Naive thymus-derived CD4-positive, alpha-beta T cell (primary cell): ENCODE measurements at regions of chr3 and their contacts with region 1.

Region 1: GRCh38 chr3:119240591-119241434 is at the start of gene B4GALT4:
- DNase-seq: peak; percentile 59 to 79 (median 63)
- ATAC-seq: peak; percentile 78
- H3K4me3 ChIP-seq: peak within 1 kb of the TSS; percentile 71
- H3K4me3 Mint-ChIP-seq: peak within 1 kb of the TSS; percentile 90 to 99 (median 94)
- H3K27ac ChIP-seq: peak within 1 kb of the TSS; percentile 90
- H3K27ac Mint-ChIP-seq: peak within 1 kb of the TSS; percentile 83 to 96 (median 91)
- H3K4me1 ChIP-seq: peaks cover 23 to 27% of the 10 kb centered on the region in 2 donors
- H3K4me1 Mint-ChIP-seq: peaks cover 24 to 45% (median 36%) of the 10 kb centered on the region in 7 donors
- H3K27me3 ChIP-seq: no peaks in the 10 kb centered on the region
- H3K27me3 Mint-ChIP-seq: no peaks in the 10 kb centered on the region
- total RNA-seq, gene B4GALT4: 18.0 to 39.8 (median 31.9) TPM

Region 2: GRCh38 chr3:118960876-118961450 is 279.9 kb before region 1 on chr3:
- CTCF ChIA-PET with region 1: interaction called, 4 read pairs
- POLR2A ChIA-PET with region 1: no interaction called
- intact Hi-C with region 1: loop called in 1 of 2 experiments (anchors 2 kb)
- DNase-seq: no peak
- ATAC-seq: no peak
- H3K4me3 ChIP-seq: no peak overlapping the region
- H3K4me3 Mint-ChIP-seq: no peak overlapping the region
- H3K27ac ChIP-seq: no peak overlapping the region
- H3K27ac Mint-ChIP-seq: no peak overlapping the region
- H3K4me1 ChIP-seq: peaks cover 9 to 19% of the 10 kb centered on the region in 2 donors
- H3K4me1 Mint-ChIP-seq: peaks cover 13 to 34% (median 29%) of the 10 kb centered on the region in 7 donors
- H3K27me3 ChIP-seq: no peaks in the 10 kb centered on the region
- H3K27me3 Mint-ChIP-seq: peaks cover 0 to 25% (median 4%) of the 10 kb centered on the region in 5 donors

Region 3: GRCh38 chr3:119206611-119207511 is 34.0 kb before region 1 on chr3:
- CTCF ChIA-PET with region 1: interaction called, 5 read pairs
- POLR2A ChIA-PET with region 1: interaction called, 9 read pairs
- intact Hi-C with region 1: loop called in 1 of 2 experiments (anchors 1 kb)
- DNase-seq: peak in 7 of 9 donors; percentile 38 to 62 (median 54)
- ATAC-seq: peak; percentile 64
- H3K4me3 ChIP-seq: peak overlapping the region; percentile 40
- H3K4me3 Mint-ChIP-seq: peak overlapping the region; percentile 45 to 88 (median 74)
- H3K27ac ChIP-seq: peak overlapping the region; percentile 66
- H3K27ac Mint-ChIP-seq: peak overlapping the region; percentile 15 to 96 (median 93)
- H3K4me1 ChIP-seq: peaks cover 0 to 57% of the 10 kb centered on the region in 2 donors
- H3K4me1 Mint-ChIP-seq: peaks cover 34 to 89% (median 79%) of the 10 kb centered on the region in 7 donors
- H3K27me3 ChIP-seq: no peaks in the 10 kb centered on the region
- H3K27me3 Mint-ChIP-seq: no peaks in the 10 kb centered on the region

Region 4: GRCh38 chr3:119322835-119323722 is 82.3 kb after region 1 on chr3:
- CTCF ChIA-PET with region 1: interaction called, 4 read pairs
- POLR2A ChIA-PET with region 1: interaction called, 3 read pairs
- intact Hi-C with region 1: loop called (anchors 1 kb)
- DNase-seq: peak; percentile 77 to 96 (median 81)
- ATAC-seq: peak; percentile 90
- H3K4me3 ChIP-seq: peak overlapping the region; percentile 65
- H3K4me3 Mint-ChIP-seq: peak overlapping the region; percentile 84 to 96 (median 90)
- H3K27ac ChIP-seq: peak overlapping the region; percentile 81
- H3K27ac Mint-ChIP-seq: peak overlapping the region; percentile 90 to 99 (median 95)
- H3K4me1 ChIP-seq: peaks cover 10 to 14% of the 10 kb centered on the region in 2 donors
- H3K4me1 Mint-ChIP-seq: peaks cover 12 to 30% (median 21%) of the 10 kb centered on the region in 7 donors
- H3K27me3 ChIP-seq: no peaks in the 10 kb centered on the region
- H3K27me3 Mint-ChIP-seq: peaks cover 0 to 57% (median 0%) of the 10 kb centered on the region in 5 donors

Region 5: DNA sequence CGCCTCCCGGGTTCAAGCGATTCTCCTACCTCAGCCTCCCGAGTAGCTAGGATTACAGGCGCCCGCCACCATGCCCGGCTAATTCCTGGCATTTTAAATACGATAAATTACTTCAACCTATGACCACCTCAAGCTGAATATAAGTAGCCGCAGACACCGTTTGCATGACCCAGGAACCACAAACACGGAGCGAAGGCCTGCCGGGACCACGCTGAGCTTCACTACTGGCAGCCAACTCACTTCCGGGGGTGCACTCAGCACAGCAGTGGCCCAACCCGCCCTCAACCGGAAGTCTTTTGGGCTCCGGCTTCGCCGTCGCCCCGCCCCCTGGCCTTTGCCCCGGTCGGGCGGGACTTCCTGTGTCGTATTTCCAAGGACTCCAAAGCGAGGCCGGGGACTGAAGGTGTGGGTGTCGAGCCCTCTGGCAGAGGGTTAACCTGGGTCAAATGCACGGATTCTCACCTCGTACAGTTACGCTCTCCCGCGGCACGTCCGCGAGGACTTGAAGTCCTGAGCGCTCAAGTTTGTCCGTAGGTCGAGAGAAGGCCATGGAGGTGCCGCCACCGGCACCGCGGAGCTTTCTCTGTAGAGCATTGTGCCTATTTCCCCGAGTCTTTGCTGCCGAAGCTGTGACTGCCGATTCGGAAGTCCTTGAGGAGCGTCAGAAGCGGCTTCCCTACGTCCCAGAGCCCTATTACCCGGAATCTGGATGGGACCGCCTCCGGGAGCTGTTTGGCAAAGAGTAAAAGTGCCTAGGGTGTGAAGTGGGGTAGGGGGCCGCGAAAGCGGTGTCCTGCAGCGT is 257.6 kb after region 1 on chr3 and contains the start of gene TIMMDC1:
- CTCF ChIA-PET with region 1: interaction called, 3 read pairs
- POLR2A ChIA-PET with region 1: interaction called, 3 read pairs
- intact Hi-C with region 1: loop called (anchors 1 kb)
- DNase-seq: peak; percentile 95 to 98 (median 97)
- ATAC-seq: peak; percentile 99
- H3K4me3 ChIP-seq: peak within 1 kb of the TSS; percentile 97
- H3K4me3 Mint-ChIP-seq: peak within 1 kb of the TSS; percentile 95 to 100 (median 99)
- H3K27ac ChIP-seq: peak within 1 kb of the TSS; percentile 96
- H3K27ac Mint-ChIP-seq: peak within 1 kb of the TSS; percentile 98 to 100 (median 99)
- H3K4me1 ChIP-seq: peaks cover 18% of the 10 kb centered on the region in 2 donors
- H3K4me1 Mint-ChIP-seq: peaks cover 22 to 41% (median 34%) of the 10 kb centered on the region in 7 donors
- H3K27me3 ChIP-seq: no peaks in the 10 kb centered on the region
- H3K27me3 Mint-ChIP-seq: no peaks in the 10 kb centered on the region
- total RNA-seq, gene TIMMDC1: 27.1 to 80.1 (median 73.4) TPM

Region 6: DNA sequence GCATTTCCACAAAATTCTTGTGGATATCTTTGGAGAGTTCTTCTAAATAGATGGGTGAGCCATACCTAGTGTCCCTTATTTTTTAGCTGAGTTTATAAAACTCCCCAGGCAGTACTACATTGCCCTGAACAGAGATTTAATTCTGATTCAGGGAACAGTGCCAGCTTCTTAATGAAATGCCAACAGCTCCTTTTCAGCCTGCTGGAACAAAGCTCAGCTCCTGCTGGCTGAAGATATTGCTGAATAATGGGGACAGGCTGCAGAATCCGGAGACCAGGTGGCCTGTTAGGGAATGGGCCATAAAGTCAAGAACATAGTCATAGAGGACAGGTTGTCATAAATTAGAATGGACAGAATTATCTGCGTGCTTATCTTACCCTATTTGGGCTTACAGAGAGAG is 1432.3 kb after region 1 on chr3:
- CTCF ChIA-PET with region 1: no interaction called
- POLR2A ChIA-PET with region 1: no interaction called
- intact Hi-C with region 1: no loop called
- DNase-seq: no peak
- ATAC-seq: no peak
- H3K4me3 ChIP-seq: no peak overlapping the region
- H3K4me3 Mint-ChIP-seq: no peak overlapping the region
- H3K27ac ChIP-seq: no peak overlapping the region
- H3K27ac Mint-ChIP-seq: no peak overlapping the region
- H3K4me1 ChIP-seq: no peaks in the 10 kb centered on the region
- H3K4me1 Mint-ChIP-seq: peaks cover 0 to 2% (median 0%) of the 10 kb centered on the region in 7 donors
- H3K27me3 ChIP-seq: no peaks in the 10 kb centered on the region
- H3K27me3 Mint-ChIP-seq: peaks cover 2 to 13% (median 9%) of the 10 kb centered on the region in 5 donors